Activated naive CD4-positive, alpha-beta T cell treated with anti-CD3 and anti-CD28 coated beads for 36 hours (primary cell): ENCODE measurements at regions of chr4 and their contacts with region 1.

Region 1: DNA sequence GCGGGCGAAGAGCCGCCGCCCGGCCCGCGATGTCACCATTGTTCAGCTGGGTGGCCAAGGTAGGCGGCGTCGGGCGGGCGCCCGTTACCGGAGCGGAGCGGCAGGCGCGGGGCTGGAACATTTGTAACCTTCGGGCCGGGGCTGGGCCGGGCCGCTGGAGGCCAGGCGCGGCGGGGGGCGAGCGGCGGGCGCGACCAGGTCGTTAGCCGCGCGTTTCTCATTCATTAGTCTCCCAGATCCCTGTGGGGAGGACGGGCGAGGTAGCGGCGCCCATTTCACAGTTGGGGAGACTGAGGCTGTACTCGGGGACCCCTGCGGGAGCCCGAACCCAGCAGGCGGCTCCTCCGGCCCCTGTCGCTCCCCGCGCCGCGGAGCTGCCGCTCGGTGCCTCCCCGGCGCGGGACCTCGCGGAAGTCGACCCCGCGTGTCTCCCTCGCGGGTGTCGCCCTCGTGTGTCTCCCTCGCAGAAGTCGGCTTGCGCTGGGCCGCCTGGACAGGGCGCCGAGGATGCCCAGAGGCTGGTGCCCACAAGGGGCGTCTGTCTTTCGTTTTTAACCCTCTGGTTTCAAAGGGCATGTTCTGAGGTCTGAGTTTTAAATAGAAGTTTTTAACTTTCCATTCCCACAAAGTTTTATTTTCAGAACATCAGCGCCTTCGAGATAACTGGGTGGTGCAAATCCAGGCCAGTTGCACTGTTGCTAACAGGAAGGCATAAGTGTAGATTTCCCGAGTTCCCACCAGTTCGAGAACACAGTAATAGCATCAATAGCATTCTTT is 17.5 kb downstream of the PTTG2 start:
- DNase-seq: peak; percentile 83
- H3K4me3 Mint-ChIP-seq: peak overlapping the region; percentile 77
- H3K27ac Mint-ChIP-seq: peak overlapping the region; percentile 26
- H3K4me1 Mint-ChIP-seq: peaks cover 27% of the 10 kb centered on the region
- H3K27me3 Mint-ChIP-seq: no peaks in the 10 kb centered on the region

Region 2: GRCh38 chr4:37802068-37802666 is 175.5 kb before region 1 on chr4:
- CTCF ChIA-PET with region 1: interaction called, 6 read pairs
- intact Hi-C with region 1: loop called (anchors 1 kb)
- DNase-seq: peak; percentile 46
- H3K4me3 Mint-ChIP-seq: no peak overlapping the region
- H3K27ac Mint-ChIP-seq: no peak overlapping the region
- H3K4me1 Mint-ChIP-seq: no peaks in the 10 kb centered on the region
- H3K27me3 Mint-ChIP-seq: no peaks in the 10 kb centered on the region